Right ventricle myocardium inferior (tissue), 1 donor: ENCODE measurements at regions of chr2 and their contacts with region 1.

Region 1: DNA sequence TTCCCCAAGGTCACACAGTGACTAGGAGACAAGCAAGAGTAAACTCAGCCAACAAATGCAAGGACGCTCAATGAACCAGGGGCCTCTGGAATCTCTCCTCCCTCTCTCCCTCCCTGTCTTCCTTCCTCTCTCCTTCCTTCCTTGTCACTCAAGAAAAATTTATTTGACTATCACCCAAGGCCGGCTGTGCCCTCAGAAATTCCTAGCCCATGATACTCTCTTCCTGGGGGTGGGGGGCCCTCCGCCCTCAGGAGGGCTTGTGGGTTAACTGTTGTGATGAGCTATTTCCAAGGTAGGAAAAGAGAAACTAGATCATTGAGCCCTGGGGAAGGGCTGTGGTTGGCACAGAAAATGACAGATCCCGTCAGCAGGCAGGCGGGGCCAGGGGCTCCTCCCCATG is 21.7 kb downstream of the INHBB start:
- DNase-seq: peak; percentile 9
- ATAC-seq: no peak

Region 2: DNA sequence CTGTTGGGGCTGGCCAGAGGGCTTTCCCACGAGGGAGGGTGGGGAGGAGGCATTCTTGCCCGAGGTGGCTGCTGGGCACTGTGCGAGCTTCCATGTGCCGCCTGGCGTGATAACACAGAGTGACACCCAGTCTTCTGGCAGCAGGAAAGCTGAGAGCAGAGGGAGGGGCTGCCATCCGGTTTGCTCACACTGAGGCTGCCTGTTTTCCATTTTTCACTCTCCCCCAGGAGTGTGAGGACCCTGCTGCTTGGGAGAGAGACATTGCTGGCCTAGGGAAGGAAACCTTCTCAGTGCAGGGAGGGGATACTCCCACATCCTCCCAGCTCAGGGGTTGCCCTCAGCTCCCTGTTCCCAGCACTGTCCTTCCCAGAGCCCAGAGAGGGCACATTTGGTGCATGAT is 51.4 kb after region 1 on chr2:
- intact Hi-C with region 1: loop called (anchors 5 kb)
- DNase-seq: peak; percentile 72
- ATAC-seq: peak; percentile 93

Region 3: DNA sequence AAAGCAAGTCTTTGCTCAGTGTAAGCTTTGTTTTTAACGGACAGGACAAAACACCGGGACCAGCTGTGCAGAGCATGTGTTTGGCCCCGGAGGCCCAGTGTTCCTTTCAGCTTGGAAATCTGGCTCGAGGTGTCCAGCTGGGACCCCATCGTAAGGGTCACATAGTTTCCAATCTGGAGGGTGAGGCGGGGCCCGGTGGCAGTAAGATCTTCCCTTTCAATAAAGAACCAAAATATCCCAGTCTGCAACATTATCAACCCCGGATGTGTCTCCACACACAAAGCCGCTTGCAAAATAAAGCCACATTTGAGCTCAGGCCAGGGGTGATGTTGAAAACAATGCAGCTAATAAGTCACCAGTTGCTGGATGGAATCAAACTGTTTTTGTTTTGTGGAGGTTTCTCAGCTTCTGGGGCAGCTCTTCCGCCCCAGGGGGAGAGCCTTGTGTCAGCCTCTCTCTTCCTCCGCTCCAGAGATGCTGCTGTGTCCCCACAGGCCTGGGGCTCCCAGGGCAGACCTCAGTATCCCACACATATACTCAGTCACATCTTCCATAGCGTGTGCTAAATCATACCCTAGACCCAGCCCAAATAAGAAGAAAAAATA is 229.4 kb after region 1 on chr2:
- intact Hi-C with region 1: no loop called
- DNase-seq: peak; percentile 74
- ATAC-seq: peak; percentile 65